Head of caudate nucleus (tissue), 42 donors: ENCODE measurements at regions of chr4 and their contacts with region 1.

Region 1: GRCh38 chr4:6783053-6783981 is 790 bp downstream of the KIAA0232 start:
- DNase-seq: peak; percentile 80 to 97 (median 94)

Region 2: DNA sequence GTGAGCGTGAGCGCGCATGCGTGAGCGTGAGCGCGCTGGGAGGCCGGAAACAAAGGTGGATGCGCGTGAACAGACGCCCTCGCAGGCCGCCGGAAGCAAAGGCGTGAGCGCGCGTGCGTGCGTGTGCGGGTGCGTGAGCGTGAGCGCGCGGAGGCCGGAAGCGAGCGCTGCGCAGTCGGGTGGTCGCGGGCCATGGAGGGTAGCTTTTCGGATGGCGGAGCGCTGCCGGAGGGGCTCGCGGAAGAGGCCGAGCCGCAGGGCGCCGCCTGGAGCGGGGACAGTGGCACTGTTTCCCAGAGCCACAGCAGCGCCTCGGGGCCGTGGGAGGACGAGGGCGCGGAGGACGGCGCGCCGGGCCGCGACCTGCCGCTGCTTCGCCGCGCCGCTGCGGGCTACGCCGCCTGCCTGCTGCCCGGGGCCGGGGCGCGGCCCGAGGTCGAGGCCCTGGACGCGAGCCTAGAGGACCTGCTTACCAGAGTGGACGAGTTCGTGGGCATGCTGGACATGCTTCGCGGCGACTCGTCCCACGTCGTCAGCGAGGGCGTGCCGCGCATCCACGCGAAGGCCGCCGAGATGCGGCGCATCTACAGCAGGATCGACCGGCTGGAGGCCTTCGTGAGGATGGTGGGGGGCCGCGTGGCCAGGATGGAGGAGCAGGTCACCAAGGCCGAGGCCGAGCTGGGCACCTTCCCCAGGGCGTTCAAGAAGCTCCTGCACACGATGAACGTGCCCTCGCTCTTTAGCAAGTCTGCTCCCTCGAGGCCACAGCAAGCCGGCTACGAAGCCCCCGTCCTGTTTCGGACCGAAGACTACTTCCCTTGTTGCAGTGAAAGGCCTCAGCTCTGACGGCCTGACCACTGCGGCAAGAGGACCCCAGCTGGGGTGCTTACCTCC is 67.1 kb before region 1 on chr4 and contains the start of gene BLOC1S4:
- intact Hi-C with region 1: loop called (anchors 2 kb)
- DNase-seq: peak; percentile 73 to 94 (median 88)

Region 3: DNA sequence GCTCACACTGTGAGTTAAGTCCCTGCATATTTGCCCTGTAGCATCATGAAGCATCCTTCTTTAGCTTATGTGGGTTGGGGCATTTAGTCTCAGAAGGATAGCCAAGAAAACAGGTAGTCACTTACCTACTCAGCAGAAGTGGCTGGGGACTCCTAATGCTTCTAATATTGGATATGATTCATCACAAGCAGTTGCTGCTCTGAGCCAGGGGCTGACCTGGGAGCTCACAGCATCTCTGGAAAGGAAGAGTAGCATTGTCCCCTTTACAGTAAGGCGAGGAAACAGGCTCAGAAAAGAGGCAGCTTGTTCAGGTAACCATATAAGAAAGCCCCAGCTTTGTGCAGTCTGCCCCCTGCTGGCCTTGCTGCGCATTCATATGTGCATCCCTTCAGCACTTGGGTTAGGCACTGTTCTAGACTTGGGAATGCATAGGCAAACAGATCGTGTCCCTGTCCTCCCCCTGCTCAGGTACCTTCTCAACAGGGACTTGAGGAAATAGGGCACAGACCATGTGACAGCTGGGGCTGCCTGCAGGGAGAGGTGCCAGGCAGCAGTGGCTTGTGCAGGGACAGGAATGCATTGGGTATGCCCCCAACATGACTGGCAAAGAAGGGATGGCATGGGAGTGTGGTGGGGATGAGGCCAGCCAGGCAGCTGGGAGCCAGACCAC is 90.6 kb after region 1 on chr4:
- intact Hi-C with region 1: loop called (anchors 10 kb)
- DNase-seq: peak; percentile 51 to 92 (median 82)

Region 4: GRCh38 chr4:6909073-6909965 is 126.0 kb after region 1 on chr4 and contains the start of gene TBC1D14:
- intact Hi-C with region 1: loop called (anchors 5 kb)
- DNase-seq: peak; percentile 60 to 96 (median 90)

Region 5: GRCh38 chr4:6986781-6987587 is 203.7 kb after region 1 on chr4:
- intact Hi-C with region 1: loop called (anchors 10 kb)
- DNase-seq: peak; percentile 86 to 99 (median 97)

Region 6: GRCh38 chr4:7042697-7043464 is 259.6 kb after region 1 on chr4 and contains the start of gene TADA2B:
- intact Hi-C with region 1: loop called (anchors 10 kb)
- DNase-seq: peak; percentile 89 to 98 (median 96)

Region 7: DNA sequence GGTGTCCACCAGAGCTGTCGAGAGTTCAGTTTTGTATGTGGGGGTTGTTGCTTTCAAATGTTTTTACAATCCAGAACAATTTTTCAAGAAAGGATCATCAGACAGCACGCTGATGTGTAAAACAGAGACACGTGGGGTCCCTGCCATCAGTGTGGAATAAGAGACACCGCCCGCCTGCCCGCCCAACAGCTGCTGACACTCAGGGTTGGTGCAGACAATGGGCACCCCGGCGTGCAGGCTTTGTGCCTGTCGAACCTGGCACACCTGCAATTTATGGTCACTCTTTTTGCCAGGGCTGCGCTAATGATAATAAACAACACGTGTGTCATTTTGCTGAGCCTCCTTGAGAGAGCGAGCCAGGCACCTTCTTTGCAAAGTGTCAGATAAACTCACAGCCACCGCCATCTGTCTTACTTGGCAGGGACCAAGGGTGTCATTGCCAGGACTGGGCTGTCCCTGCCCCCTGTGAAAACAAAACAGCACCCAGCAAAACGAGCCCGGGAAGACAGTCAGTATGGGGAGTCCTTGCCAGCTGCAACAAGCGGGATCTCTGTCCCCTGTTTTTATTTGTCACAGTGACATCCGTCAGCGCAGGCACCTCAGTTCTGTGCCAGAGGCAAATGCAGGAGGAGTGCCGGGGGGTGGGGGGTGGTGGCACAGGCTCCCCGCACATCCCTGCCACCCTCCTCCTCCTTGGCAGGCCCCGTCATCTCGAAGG is 582.3 kb after region 1 on chr4:
- intact Hi-C with region 1: no loop called
- DNase-seq: peak; percentile 61 to 96 (median 86)